ENCODE measurements at regions of chr14 and their contacts with region 1.

Region 1: DNA sequence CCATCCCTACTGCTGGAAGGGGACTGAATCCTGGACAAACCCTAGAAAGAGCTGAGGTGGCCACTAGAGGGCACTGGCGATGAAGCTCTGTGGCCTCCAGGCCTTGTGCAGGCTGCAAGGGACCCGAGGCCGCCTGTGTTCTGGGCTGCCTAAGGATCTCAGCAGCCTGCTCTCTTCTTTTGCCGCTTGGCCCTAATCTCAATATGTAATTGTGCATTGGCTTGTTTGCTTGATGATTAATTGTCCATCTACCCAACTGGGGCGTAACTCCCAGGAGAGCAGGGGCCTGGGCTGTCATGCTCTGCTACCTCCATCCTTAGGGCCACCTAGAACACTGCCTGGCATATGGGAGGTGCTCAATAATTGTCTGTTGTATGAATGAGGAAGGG is 73.8 kb downstream of the SYNE3 start:
- DNase-seq: peak; percentile 84
- ATAC-seq: peak; percentile 95
- H3K4me3 Mint-ChIP-seq: no peak overlapping the region
- H3K27ac Mint-ChIP-seq: peak overlapping the region; percentile 2
- H3K4me1 Mint-ChIP-seq: peaks cover 4% of the 10 kb centered on the region
- H3K27me3 Mint-ChIP-seq: no peaks in the 10 kb centered on the region
- CTCF ChIP-seq: peak; percentile 79

Region 2: GRCh38 chr14:95460647-95461478 is 18.2 kb after region 1 on chr14:
- CTCF ChIA-PET with region 1: interaction called, 31 read pairs
- POLR2A ChIA-PET with region 1: interaction called, 5 read pairs
- intact Hi-C with region 1: no loop called
- DNase-seq: no peak
- ATAC-seq: no peak
- H3K4me3 Mint-ChIP-seq: no peak overlapping the region
- H3K27ac Mint-ChIP-seq: no peak overlapping the region
- H3K4me1 Mint-ChIP-seq: peaks cover 32% of the 10 kb centered on the region
- H3K27me3 Mint-ChIP-seq: no peaks in the 10 kb centered on the region
- CTCF ChIP-seq: no peak

Region 3: DNA sequence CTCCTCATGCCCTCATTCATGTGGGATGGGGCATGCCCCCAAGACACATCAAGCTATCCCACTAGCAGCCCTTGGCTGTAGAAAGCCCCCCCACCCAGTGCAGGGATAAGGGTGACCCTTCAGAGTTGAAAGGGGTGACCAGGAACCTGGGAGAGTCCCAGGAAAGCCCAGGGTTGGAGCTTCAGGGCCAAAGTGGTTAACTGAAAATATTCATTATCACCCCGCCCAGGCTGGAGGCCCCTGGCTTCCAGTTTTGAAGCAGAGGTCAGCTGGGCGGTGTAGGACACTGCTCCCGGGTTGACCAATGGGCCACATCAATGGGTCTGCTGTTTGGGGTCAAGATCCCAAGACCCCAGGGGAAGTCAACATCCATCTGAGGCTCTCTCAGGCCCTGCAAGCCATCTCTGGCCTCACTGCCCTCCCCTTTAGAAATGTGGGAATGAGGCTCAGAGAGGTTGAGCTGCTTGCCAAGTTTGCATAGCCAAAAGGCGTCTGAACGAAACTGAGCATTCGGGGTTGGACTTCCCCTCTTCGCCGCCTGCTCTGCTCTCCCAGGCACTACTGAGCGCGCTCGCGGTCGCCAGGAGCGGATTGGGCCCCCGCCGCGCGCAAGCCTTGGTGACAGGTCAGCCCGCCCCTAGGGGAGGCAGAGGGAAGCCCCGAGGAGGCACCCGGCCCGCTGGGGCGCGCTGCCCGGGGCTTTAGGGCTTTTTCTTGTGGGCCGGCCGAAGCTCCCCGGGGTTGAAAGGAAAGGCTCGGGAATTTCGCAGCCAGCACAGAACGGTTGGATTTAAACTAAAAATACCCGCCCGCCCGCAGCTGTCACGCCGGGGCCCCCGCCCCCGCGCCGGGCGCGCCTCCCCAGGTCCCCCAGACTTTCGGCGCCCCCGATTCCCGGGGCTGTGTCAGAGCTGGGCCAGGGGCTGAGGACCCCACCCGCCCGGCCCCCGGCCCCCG is 73.2 kb after region 1 on chr14:
- CTCF ChIA-PET with region 1: interaction called, 29 read pairs
- POLR2A ChIA-PET with region 1: interaction called, 3 read pairs
- intact Hi-C with region 1: no loop called
- DNase-seq: peak; percentile 92
- ATAC-seq: peak; percentile 85
- H3K4me3 Mint-ChIP-seq: peak overlapping the region; percentile 93
- H3K27ac Mint-ChIP-seq: peak overlapping the region; percentile 92
- H3K4me1 Mint-ChIP-seq: peaks cover 67% of the 10 kb centered on the region
- H3K27me3 Mint-ChIP-seq: no peaks in the 10 kb centered on the region
- CTCF ChIP-seq: peak; percentile 54

Region 4: DNA sequence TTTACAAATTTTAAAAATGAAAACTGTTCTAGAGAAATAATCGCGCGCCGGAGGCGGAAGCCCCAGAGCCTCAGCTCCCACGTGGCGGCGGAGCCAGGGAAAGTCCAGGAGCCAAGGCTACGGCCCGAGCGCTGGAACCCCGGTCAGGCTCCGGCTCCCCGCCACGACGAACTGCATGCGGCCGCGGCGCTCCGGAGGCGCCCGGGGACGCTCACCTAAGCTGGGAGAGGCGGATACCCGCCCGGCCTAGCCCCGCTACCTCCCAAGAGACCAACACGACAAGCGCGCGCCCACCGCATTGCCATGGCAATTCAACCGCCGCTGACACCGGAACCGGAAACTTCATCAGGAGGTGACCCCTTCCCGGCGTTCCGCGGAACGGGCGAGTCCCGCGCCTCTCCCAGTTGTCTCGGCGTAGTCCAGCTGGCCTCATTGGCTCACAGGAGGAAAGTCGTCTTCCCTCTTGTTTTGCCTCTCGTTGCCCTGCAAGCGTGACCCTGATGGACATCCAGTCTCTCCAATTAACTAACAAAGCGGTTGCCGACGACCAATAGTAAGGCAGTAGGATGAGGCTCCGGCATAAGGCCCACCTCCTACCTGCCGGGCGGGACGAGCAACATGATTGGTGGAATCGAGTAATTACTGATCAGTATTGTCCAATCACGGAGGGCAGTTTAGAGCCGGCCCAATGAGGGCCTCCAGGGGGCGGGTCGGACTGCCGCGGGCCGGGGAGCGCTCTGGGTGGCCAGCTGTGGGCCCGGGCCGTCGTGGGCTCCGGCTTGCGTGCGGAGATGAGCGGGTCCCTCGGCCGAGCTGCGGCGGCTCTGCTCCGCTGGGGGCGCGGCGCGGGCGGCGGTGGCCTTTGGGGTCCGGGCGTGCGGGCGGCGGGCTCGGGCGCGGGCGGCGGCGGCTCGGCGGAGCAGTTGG is 91.9 kb after region 1 on chr14 and contains the start of gene GLRX5:
- CTCF ChIA-PET with region 1: interaction called, 188 read pairs
- POLR2A ChIA-PET with region 1: interaction called, 7 read pairs
- intact Hi-C with region 1: loop called (anchors 2 kb)
- DNase-seq: peak; percentile 99
- ATAC-seq: peak; percentile 92
- H3K4me3 Mint-ChIP-seq: peak within 1 kb of the TSS; percentile 98
- H3K27ac Mint-ChIP-seq: peak within 1 kb of the TSS; percentile 93
- H3K4me1 Mint-ChIP-seq: peaks cover 67% of the 10 kb centered on the region
- H3K27me3 Mint-ChIP-seq: no peaks in the 10 kb centered on the region
- CTCF ChIP-seq: no peak
- total RNA-seq, gene GLRX5: 47.3 to 47.8 TPM

Measured in activated CD8-positive, alpha-beta T cell treated with anti-CD3 and anti-CD28 coated beads for 36 hours (primary cell).